Mammary epithelial cell (primary cell): ENCODE measurements at regions of chr15 and their contacts with region 1.

Region 1: GRCh38 chr15:68383161-68384074 is 48.5 kb downstream of the ITGA11 start:
- DNase-seq: peak; percentile 43
- H3K4me3 ChIP-seq: no peak overlapping the region
- H3K27ac ChIP-seq: no peak overlapping the region
- H3K4me1 ChIP-seq: peaks cover 18% of the 10 kb centered on the region
- H3K27me3 ChIP-seq: no peaks in the 10 kb centered on the region
- CTCF ChIP-seq: peak; percentile 80 to 95

Region 2: GRCh38 chr15:68229386-68230156 is 153.8 kb before region 1 on chr15 and contains the start of gene CLN6:
- CTCF ChIA-PET with region 1: no interaction called
- dilution Hi-C with region 1: no loop called
- in situ Hi-C with region 1: loop called in 1 of 2 experiments (anchors 25 kb)
- intact Hi-C with region 1: no loop called
- DNase-seq: peak; percentile 83
- H3K4me3 ChIP-seq: peak within 1 kb of the TSS; percentile 58 to 67 (median 67)
- H3K27ac ChIP-seq: peak within 1 kb of the TSS; percentile 70
- H3K4me1 ChIP-seq: peaks cover 13% of the 10 kb centered on the region
- H3K27me3 ChIP-seq: no peaks in the 10 kb centered on the region
- CTCF ChIP-seq: no peak
- total RNA-seq, gene CLN6: 18.7 to 40.9 TPM

Region 3: GRCh38 chr15:68672781-68673205 is 289.4 kb after region 1 on chr15:
- CTCF ChIA-PET with region 1: no interaction called
- dilution Hi-C with region 1: no loop called
- in situ Hi-C with region 1: no loop called
- intact Hi-C with region 1: no loop called
- DNase-seq: no peak
- H3K4me3 ChIP-seq: no peak overlapping the region
- H3K27ac ChIP-seq: no peak overlapping the region
- H3K4me1 ChIP-seq: peaks cover 14% of the 10 kb centered on the region
- H3K27me3 ChIP-seq: no peaks in the 10 kb centered on the region
- CTCF ChIP-seq: peak; percentile 22 to 36